PC-3 (cell line): ENCODE measurements at regions of chr19 and their contacts with region 1.

Region 1: DNA sequence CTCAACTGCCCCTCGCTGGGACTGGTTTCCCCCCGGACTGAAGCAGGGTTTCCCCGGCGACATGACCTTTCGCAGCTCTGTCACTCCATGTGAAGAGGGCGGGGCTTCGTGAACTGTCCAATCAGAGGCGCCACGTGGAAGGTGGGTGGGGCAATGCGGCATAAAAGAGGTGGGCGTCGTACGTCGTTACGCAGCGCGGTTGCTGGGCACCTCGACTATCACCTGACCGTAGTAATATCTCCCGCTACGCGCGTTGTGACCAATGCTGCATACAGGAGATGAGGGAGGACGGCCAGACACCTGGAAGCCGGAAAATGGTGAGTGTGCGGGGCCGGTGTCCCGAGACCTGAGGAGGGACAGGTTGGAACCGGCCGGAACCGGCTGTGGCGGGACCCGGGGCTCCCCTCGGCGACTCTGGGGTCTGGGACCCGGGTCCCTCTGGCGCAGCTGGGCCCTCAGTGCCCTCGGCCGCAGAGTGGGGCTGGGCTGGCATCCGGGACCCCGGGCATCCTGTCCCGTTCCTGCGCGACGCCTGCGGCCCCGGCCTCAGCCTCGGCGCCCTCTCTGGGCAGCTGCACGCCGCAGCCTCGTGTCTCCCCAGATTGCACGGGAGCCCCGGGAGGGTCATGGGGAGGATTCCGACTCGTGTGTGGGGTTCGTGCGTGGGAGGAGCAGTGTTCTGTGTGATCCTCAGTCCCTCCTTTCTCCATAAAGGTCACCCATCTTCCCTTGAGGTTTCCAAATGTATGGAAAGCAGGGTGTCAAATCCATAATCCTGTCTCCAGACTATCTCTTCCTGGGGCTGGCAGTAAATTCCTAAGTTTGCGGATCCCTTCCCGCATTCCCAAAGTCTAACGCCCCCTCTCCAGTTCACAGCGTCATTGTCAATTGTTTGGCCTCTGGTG is 32.2 kb downstream of the ZNF136 start:
- DNase-seq: no peak
- ATAC-seq: no peak
- H3K4me3 ChIP-seq: no peak overlapping the region
- H3K27ac ChIP-seq: no peak overlapping the region
- H3K4me1 ChIP-seq: no peaks in the 10 kb centered on the region
- H3K27me3 ChIP-seq: no peaks in the 10 kb centered on the region
- CTCF ChIP-seq: no peak

Region 2: DNA sequence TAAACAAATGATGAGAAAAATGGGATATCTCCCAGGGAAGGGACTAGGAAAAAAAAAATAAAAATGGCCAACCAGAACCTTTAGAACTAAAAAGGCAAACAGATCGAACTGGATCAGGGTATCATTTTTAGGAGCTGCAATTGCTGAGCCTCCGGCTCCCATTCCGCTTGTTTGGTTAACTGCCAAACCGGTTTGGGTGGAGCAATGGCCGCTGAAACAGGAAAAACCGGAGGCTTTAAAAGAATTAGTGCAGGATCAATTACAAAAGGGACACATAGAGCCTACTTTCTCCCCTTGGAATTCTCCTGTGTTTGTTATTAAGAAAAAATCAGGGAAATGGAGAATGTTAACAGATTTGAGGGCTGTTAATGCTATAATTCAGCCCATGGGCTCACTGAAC is 258.4 kb after region 1 on chr19:
- CTCF ChIA-PET with region 1: no interaction called
- POLR2A ChIA-PET with region 1: no interaction called
- intact Hi-C with region 1: no loop called
- DNase-seq: peak; percentile 55
- ATAC-seq: no peak
- H3K4me3 ChIP-seq: no peak overlapping the region
- H3K27ac ChIP-seq: no peak overlapping the region
- H3K4me1 ChIP-seq: 0 out of 2 replicates have a peak, but pooled peaks cover 5% of the 10 kb centered on the region
- H3K27me3 ChIP-seq: no peaks in the 10 kb centered on the region
- CTCF ChIP-seq: no peak

Region 3: GRCh38 chr19:12965017-12965811 is 770.1 kb after region 1 on chr19:
- CTCF ChIA-PET with region 1: interaction called, 11 read pairs
- POLR2A ChIA-PET with region 1: no interaction called
- intact Hi-C with region 1: no loop called
- DNase-seq: peak; percentile 89
- ATAC-seq: peak; percentile 97
- H3K4me3 ChIP-seq: peak overlapping the region; percentile 66
- H3K27ac ChIP-seq: peak overlapping the region; percentile 27
- H3K4me1 ChIP-seq: peaks cover 3% of the 10 kb centered on the region; the same call in 1 of the 2 replicates
- H3K27me3 ChIP-seq: no peaks in the 10 kb centered on the region
- CTCF ChIP-seq: peak; percentile 93